ENCODE measurements at regions of chr16 and their contacts with region 1.

Region 1: GRCh38 chr16:67246934-67247697 is at the start of gene FHOD1:
- DNase-seq: peak; percentile 98 to 99
- ATAC-seq: peak; percentile 45 to 46
- H3K4me3 ChIP-seq: peak within 1 kb of the TSS; percentile 84 to 93 (median 90)
- H3K27ac ChIP-seq: peak within 1 kb of the TSS; percentile 94 to 99 (median 98)
- H3K4me1 ChIP-seq: peaks cover 56 to 59% of the 10 kb centered on the region in 2 donors
- H3K27me3 ChIP-seq: no peaks in the 10 kb centered on the region
- CTCF ChIP-seq: peak in 2 of 5 experiments; percentile 6 to 25
- POLR2A ChIP-seq: peak; percentile 86 to 93
- total RNA-seq, gene FHOD1: 26.3 to 65.3 (median 52.4) TPM

Region 2: GRCh38 chr16:67173808-67174705 is 73.1 kb before region 1 on chr16:
- in situ Hi-C with region 1: no loop called
- intact Hi-C with region 1: loop called (anchors 5 kb)
- DNase-seq: peak; percentile 89 to 96
- ATAC-seq: peak; percentile 56 to 65
- H3K4me3 ChIP-seq: peak overlapping the region; percentile 61 to 67 (median 65)
- H3K27ac ChIP-seq: peak overlapping the region; percentile 94 to 100 (median 96)
- H3K4me1 ChIP-seq: peaks cover 52 to 70% of the 10 kb centered on the region in 2 donors
- H3K27me3 ChIP-seq: no peaks in the 10 kb centered on the region
- CTCF ChIP-seq: peak; percentile 9 to 55 (median 30)
- POLR2A ChIP-seq: peak; percentile 78 to 88

Region 3: DNA sequence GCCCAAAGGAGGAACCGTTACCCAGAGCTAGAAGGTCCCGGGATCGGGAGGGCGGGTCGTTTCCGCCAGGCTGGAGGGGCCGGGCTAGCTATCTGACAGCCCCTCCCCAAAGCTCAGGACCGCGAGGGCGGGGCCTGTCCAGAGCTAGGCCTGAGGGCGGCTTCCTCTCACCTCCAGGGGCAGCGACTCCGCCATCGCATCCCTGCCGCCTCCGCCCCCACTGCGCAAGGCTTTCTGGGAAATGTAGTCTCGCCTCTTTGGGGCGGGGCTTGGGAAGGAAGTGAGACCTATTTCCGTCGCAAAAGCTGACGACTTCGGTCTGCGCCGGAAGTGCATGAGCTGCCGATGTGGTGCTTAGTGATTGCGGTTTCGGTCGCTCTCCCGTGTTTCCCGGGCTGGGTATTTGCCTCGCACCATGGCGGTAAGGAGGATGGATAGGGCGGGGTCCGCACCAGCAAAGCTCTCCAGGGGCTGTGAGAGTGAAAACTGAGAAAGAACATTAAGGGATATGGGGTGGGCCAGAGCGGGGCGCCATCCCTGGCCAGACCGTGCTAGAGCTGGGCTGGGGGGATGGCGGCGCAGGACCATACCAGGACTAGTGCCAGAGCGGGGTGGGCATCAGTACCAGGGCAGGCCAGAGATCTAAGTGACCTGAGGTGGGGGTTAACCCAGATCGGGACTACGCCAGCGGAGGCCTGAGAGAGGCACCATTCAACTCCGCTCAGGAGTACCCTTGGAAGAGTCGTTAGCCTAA is 20.1 kb before region 1 on chr16 and contains the start of gene TMEM208:
- in situ Hi-C with region 1: no loop called
- intact Hi-C with region 1: loop called (anchors 1 kb)
- DNase-seq: peak; percentile 95 to 97
- ATAC-seq: peak; percentile 89 to 93
- H3K4me3 ChIP-seq: peak within 1 kb of the TSS; percentile 86 to 99 (median 96)
- H3K27ac ChIP-seq: peak within 1 kb of the TSS; percentile 83 to 94 (median 85)
- H3K4me1 ChIP-seq: peaks cover 19 to 22% of the 10 kb centered on the region in 2 donors
- H3K27me3 ChIP-seq: no peaks in the 10 kb centered on the region
- CTCF ChIP-seq: peak in 1 of 5 experiments; percentile 33
- POLR2A ChIP-seq: peak; percentile 73 to 87
- total RNA-seq, gene TMEM208: 14.7 to 35.8 (median 29.2) TPM

Region 4: DNA sequence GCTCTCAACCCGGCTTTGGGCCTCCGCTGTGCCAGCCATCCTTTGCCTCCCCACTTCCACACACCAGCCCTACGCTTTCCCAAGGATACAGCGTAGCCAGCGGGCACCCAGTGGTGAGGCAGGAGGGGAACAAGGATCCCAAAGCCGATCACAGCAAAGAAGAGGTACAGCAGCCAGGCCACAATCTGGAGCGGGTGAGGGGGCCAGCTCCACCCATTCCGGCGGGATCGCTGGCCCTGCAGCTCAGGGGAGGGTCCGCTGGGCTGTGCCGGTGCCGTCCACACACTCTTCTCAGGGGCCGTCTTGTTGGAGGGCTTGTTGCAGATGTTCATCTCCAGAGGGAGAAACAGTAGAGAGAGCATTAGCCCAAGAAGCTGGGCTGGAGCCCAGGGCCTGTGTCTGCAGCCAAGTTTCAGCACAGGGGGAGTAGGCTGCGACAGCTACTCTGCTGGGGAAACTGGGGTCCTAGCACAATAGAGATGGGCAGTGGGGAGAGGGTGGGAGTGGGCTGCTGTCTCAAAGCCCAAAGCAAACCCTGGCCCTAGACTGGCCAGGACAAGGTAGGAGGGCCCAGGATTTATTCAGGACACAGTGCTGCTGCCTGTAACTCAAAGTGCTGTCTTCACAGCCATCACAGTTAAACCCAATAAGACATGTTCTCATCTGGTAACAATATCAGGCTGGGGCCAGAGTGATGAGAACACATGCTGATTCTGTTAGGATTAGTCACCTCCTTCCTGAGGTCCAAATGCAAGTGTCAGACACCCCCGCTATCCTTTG is 159.2 kb after region 1 on chr16:
- in situ Hi-C with region 1: no loop called
- intact Hi-C with region 1: loop called (anchors 5 kb)
- DNase-seq: peak in 1 of 2 donors; percentile 63
- ATAC-seq: peak; percentile 92 to 97
- H3K4me3 ChIP-seq: no peak overlapping the region
- H3K27ac ChIP-seq: peak overlapping the region; percentile 71 to 85 (median 82)
- H3K4me1 ChIP-seq: peaks cover 33 to 48% of the 10 kb centered on the region in 2 donors
- H3K27me3 ChIP-seq: no peaks in the 10 kb centered on the region
- CTCF ChIP-seq: no peak
- POLR2A ChIP-seq: no peak

Region 5: DNA sequence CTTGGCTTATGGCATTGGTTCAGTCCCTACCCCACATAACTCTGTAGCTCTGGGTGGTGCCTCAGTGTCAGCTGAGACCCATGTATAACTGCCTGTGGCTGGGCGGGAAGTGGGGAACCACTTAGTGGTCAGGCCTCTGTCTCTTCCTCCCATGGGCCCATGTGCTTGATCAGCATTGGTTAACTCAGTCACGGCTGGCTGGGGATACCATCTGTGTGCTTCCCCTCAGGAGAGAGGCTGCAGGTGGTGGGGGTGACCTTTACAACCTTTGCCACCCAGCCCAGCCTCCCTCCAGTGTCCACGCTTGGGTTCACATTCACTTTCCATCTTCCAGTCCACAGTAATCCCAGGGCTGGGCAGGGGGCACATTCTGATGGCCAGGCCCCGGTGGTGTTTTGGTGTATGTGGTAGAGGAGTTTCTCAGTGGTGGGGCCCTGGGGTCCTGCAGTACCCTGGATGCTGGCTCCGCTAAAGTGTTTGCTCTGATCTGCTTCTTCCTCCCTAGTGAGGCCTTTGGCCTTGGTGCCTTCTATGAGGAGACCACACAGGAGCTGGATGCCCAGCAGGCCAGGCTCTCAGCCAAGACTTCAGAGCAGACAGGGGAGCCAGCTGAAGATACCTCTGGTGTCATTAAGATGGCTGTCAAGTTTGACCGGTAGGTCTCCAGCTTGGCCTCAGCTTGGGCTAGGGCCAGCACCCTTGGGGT is 827.9 kb after region 1 on chr16:
- in situ Hi-C with region 1: no loop called
- intact Hi-C with region 1: loop called (anchors 5 kb)
- DNase-seq: no peak
- ATAC-seq: no peak
- H3K4me3 ChIP-seq: no peak overlapping the region
- H3K27ac ChIP-seq: peak overlapping the region; percentile 45 to 89 (median 64)
- H3K4me1 ChIP-seq: peaks cover 38 to 45% of the 10 kb centered on the region in 2 donors
- H3K27me3 ChIP-seq: no peaks in the 10 kb centered on the region
- CTCF ChIP-seq: no peak
- POLR2A ChIP-seq: no peak

Measured in gastrocnemius medialis (tissue), 4 donors.